Activated naive CD4-positive, alpha-beta T cell treated with anti-CD3 and anti-CD28 coated beads for 36 hours (primary cell): ENCODE measurements at regions of chr15 and their contacts with region 1.

Region 1: GRCh38 chr15:35674873-35675781 is 129.2 kb upstream of the DPH6 start:
- DNase-seq: no peak
- H3K4me3 Mint-ChIP-seq: no peak overlapping the region
- H3K27ac Mint-ChIP-seq: no peak overlapping the region
- H3K4me1 Mint-ChIP-seq: peaks cover 11% of the 10 kb centered on the region
- H3K27me3 Mint-ChIP-seq: no peaks in the 10 kb centered on the region

Region 2: DNA sequence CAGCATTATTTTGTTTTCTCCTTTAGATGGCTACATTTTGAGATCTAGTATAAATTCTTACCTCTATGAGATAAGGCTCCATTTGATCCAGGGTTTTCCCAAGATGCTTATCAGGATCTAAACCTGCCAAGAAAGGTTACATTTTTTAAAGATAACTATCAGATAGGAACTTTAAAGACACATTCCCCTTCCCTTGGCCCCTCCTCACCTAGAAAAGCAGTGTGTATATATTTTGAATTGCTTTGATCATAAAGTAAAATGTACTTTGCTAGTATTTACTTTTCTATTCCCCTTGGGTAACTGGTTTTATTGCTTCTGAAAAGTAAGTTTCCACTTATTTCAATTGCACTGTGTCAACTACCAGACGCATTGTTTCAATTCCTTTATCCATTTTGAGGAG is 264.4 kb before region 1 on chr15:
- CTCF ChIA-PET with region 1: no interaction called
- intact Hi-C with region 1: no loop called
- DNase-seq: no peak
- H3K4me3 Mint-ChIP-seq: no peak overlapping the region
- H3K27ac Mint-ChIP-seq: no peak overlapping the region
- H3K4me1 Mint-ChIP-seq: no peaks in the 10 kb centered on the region
- H3K27me3 Mint-ChIP-seq: no peaks in the 10 kb centered on the region

Region 3: DNA sequence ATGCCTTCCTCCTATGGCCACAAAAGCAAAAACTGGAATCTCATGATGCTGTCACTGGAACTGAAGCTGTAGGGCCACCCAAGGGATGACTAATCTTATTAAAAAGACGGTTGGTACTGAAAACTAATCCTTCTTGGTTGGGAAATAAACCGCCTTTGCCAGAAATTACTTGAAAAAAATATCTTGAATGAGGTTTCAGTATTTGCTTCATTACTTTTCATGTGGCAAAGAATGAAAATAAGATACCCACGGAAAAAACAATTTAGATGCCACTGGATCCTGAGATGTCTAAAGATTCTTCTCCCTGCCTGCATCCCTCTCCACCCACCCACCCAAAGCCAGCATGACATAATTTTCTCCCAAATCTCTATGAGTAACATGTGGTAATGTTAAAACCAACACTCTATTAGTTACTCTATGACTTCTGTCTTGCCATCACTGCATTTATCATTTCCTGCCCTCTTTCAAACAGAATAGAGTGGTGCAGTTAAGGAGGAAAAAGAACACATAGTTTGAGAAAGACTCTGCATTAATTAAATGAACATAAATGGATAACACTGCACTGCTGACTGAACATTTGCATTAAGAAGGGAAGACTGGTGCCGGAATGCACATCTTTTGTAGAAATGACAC is 17.3 kb before region 1 on chr15:
- CTCF ChIA-PET with region 1: no interaction called
- intact Hi-C with region 1: loop called (anchors 2 kb)
- DNase-seq: peak; percentile 55
- H3K4me3 Mint-ChIP-seq: no peak overlapping the region
- H3K27ac Mint-ChIP-seq: peak overlapping the region; percentile 4
- H3K4me1 Mint-ChIP-seq: peaks cover 7% of the 10 kb centered on the region
- H3K27me3 Mint-ChIP-seq: peaks cover 16% of the 10 kb centered on the region

Region 4: GRCh38 chr15:37361621-37362020 is 1686.5 kb after region 1 on chr15:
- CTCF ChIA-PET with region 1: no interaction called
- intact Hi-C with region 1: no loop called
- DNase-seq: no peak
- H3K4me3 Mint-ChIP-seq: no peak overlapping the region
- H3K27ac Mint-ChIP-seq: no peak overlapping the region
- H3K4me1 Mint-ChIP-seq: no peaks in the 10 kb centered on the region
- H3K27me3 Mint-ChIP-seq: no peaks in the 10 kb centered on the region